Ascending aorta (tissue), 2 donors: ENCODE measurements at regions of chr10 and their contacts with region 1.

Region 1: GRCh38 chr10:60896033-60896432 is 48.0 kb downstream of the RHOBTB1 start:
- DNase-seq: no peak
- H3K4me3 ChIP-seq: no peak overlapping the region
- H3K27ac ChIP-seq: no peak overlapping the region
- H3K4me1 ChIP-seq: peaks cover 0 to 15% of the 10 kb centered on the region in 2 donors
- H3K27me3 ChIP-seq: no peaks in the 10 kb centered on the region
- CTCF ChIP-seq: no peak

Region 2: GRCh38 chr10:60944159-60944909 is 48.3 kb after region 1 on chr10 and contains the start of gene RHOBTB1:
- intact Hi-C with region 1: loop called (anchors 10 kb)
- DNase-seq: peak; percentile 23 to 90
- H3K4me3 ChIP-seq: peak within 1 kb of the TSS; percentile 88 to 94
- H3K27ac ChIP-seq: peak within 1 kb of the TSS; percentile 100
- H3K4me1 ChIP-seq: peaks cover 0 to 11% of the 10 kb centered on the region in 2 donors
- H3K27me3 ChIP-seq: no peaks in the 10 kb centered on the region
- CTCF ChIP-seq: no peak
- total RNA-seq, gene RHOBTB1: 13.6 TPM